ENCODE measurements at regions of chr1 and their contacts with region 1.

Region 1: DNA sequence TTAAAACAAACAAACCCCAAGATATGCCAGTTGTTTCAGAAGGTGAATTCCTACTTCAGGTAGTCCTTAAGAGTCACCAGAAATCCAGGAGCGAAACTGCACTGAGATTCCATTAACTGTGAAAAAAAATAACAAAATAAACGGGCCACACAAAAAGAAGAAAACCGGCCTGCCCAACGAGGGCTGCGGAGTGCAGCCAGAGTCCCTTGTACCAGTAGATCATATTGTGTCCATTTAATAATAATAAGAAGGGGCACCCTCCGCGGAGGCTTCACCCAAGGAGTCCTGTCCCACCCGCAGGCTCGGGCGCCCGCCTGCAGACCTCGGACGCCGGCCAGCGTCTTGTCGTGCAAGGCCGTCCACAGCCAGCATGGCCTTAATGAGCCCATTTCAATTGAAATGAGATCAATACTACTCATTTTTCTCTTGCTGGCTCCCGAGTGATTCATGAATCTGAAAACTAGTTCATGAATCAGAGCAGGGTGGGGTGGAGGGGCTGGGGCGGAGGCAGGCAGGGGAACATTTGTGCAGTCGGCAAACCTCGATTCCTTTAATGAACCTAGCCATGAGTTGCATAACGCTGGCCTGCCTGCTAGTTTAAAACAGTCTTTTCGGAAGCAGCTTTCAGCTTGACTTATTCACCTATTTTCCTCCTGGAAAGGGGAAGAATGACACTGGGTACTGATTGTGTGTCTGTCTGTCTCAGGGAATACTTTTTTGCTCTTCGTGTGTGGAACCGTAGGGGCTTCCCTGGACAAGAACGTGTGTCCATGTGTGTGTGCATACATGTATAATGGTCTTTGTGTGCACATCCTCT is 113.1 kb upstream of the IRF2BP2 start:
- DNase-seq: peak in 2 of 4 donors; percentile 69 to 77
- ATAC-seq: peak; percentile 36
- H3K4me3 ChIP-seq: no peak overlapping the region
- H3K27ac ChIP-seq: peak overlapping the region; percentile 97 to 99
- H3K4me1 ChIP-seq: peaks cover 67 to 96% of the 10 kb centered on the region in 2 donors
- H3K27me3 ChIP-seq: no peaks in the 10 kb centered on the region
- CTCF ChIP-seq: no peak

Region 2: GRCh38 chr1:234499119-234499942 is 223.8 kb before region 1 on chr1:
- intact Hi-C with region 1: no loop called
- DNase-seq: peak; percentile 87 to 98 (median 92)
- ATAC-seq: peak; percentile 97
- H3K4me3 ChIP-seq: no peak overlapping the region
- H3K27ac ChIP-seq: peak overlapping the region; percentile 82 to 90
- H3K4me1 ChIP-seq: peaks cover 13 to 22% of the 10 kb centered on the region in 2 donors
- H3K27me3 ChIP-seq: no peaks in the 10 kb centered on the region
- CTCF ChIP-seq: peak; percentile 84 to 95

Region 3: GRCh38 chr1:234533975-234534876 is 188.9 kb before region 1 on chr1:
- intact Hi-C with region 1: loop called in 1 of 2 experiments (anchors 5 kb)
- DNase-seq: peak in 3 of 4 donors; percentile 90 to 99 (median 98)
- ATAC-seq: peak; percentile 8
- H3K4me3 ChIP-seq: no peak overlapping the region
- H3K27ac ChIP-seq: peak overlapping the region; percentile 84 to 91
- H3K4me1 ChIP-seq: peaks cover 67 to 71% of the 10 kb centered on the region in 2 donors
- H3K27me3 ChIP-seq: no peaks in the 10 kb centered on the region
- CTCF ChIP-seq: no peak

Region 4: GRCh38 chr1:234610348-234611152 is 112.6 kb before region 1 on chr1:
- intact Hi-C with region 1: loop called in 1 of 2 experiments (anchors 5 kb)
- DNase-seq: peak; percentile 94 to 98 (median 96)
- ATAC-seq: peak; percentile 66
- H3K4me3 ChIP-seq: peak overlapping the region; percentile 31 to 44
- H3K27ac ChIP-seq: peak overlapping the region; percentile 95 to 98
- H3K4me1 ChIP-seq: peaks cover 12 to 62% of the 10 kb centered on the region in 2 donors
- H3K27me3 ChIP-seq: no peaks in the 10 kb centered on the region
- CTCF ChIP-seq: no peak

Region 5: GRCh38 chr1:234862944-234863515 is 139.9 kb after region 1 on chr1:
- intact Hi-C with region 1: loop called in 1 of 2 experiments (anchors 10 kb)
- DNase-seq: peak in 3 of 4 donors; percentile 47 to 74 (median 71)
- ATAC-seq: peak; percentile 51
- H3K4me3 ChIP-seq: no peak overlapping the region
- H3K27ac ChIP-seq: peak overlapping the region; percentile 44 to 63
- H3K4me1 ChIP-seq: peaks cover 13 to 42% of the 10 kb centered on the region in 2 donors
- H3K27me3 ChIP-seq: no peaks in the 10 kb centered on the region
- CTCF ChIP-seq: no peak

Region 6: DNA sequence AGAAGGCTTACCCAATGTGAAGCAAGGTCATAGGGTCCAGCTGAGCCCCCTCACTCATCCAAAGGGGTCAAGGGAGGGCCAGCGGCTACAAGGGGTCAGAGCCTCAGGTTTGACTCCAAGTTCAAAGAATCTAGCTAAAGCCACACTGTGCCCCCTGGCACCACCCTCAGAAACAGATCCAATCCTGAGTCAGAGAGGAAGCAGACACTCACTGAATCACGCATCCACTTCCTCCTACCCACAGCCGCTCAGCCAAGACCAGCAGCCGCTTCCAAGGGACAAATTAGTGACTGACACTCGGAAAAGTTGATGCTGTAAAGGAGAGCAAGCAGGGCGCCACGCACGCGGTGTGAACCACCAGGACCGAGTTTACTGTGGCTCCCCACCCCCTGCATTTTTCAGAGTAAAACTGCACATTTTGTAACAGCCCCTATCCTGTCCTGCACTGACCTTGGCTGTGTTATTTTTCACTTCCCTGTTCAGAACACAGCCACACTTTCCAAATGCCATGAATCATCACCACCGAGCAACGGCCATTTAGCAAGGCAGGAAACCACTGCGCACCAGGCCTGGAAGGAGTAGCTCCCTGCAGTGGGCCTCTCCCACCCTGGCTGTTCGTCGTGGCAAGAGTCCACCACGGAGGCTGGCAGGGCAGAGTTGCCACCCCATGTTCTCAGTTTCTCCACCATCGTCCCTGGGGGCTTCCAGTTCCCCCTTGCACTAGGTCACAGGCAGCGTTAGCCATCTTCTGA is 257.7 kb after region 1 on chr1:
- intact Hi-C with region 1: loop called in 1 of 2 experiments (anchors 5 kb)
- DNase-seq: peak in 3 of 4 donors; percentile 48 to 91 (median 85)
- ATAC-seq: peak; percentile 69
- H3K4me3 ChIP-seq: peak overlapping the region in 1 of 2 donors; percentile 36
- H3K27ac ChIP-seq: peak overlapping the region; percentile 87 to 99
- H3K4me1 ChIP-seq: peaks cover 53 to 99% of the 10 kb centered on the region in 2 donors
- H3K27me3 ChIP-seq: no peaks in the 10 kb centered on the region
- CTCF ChIP-seq: peak in 1 of 2 donors; percentile 13

Region 7: GRCh38 chr1:235075188-235075926 is 352.2 kb after region 1 on chr1:
- intact Hi-C with region 1: loop called in 1 of 2 experiments (anchors 5 kb)
- DNase-seq: peak in 2 of 4 donors; percentile 84 to 87
- ATAC-seq: peak; percentile 58
- H3K4me3 ChIP-seq: no peak overlapping the region
- H3K27ac ChIP-seq: peak overlapping the region; percentile 88 to 92
- H3K4me1 ChIP-seq: peaks cover 35 to 91% of the 10 kb centered on the region in 2 donors
- H3K27me3 ChIP-seq: no peaks in the 10 kb centered on the region
- CTCF ChIP-seq: no peak

Measured in left lung (tissue), 14 donors.